CD8-positive, alpha-beta memory T cell (primary cell): ENCODE measurements at regions of chr1 and their contacts with region 1.

Region 1: GRCh38 chr1:185317034-185317885 is at the start of gene IVNS1ABP:
- DNase-seq: peak; percentile 91 to 97 (median 95)
- H3K4me3 ChIP-seq: peak within 1 kb of the TSS; percentile 91
- H3K4me3 Mint-ChIP-seq: peak within 1 kb of the TSS; percentile 93 to 99 (median 98)
- H3K27ac ChIP-seq: peak within 1 kb of the TSS; percentile 98
- H3K27ac Mint-ChIP-seq: peak within 1 kb of the TSS; percentile 95 to 100 (median 99)
- H3K4me1 ChIP-seq: peaks cover 46% of the 10 kb centered on the region
- H3K4me1 Mint-ChIP-seq: peaks cover 47 to 58% (median 55%) of the 10 kb centered on the region in 3 donors
- H3K27me3 ChIP-seq: no peaks in the 10 kb centered on the region
- H3K27me3 Mint-ChIP-seq: peaks cover 0 to 10% of the 10 kb centered on the region in 2 donors
- total RNA-seq, gene IVNS1ABP: 205 to 208 TPM

Region 2: DNA sequence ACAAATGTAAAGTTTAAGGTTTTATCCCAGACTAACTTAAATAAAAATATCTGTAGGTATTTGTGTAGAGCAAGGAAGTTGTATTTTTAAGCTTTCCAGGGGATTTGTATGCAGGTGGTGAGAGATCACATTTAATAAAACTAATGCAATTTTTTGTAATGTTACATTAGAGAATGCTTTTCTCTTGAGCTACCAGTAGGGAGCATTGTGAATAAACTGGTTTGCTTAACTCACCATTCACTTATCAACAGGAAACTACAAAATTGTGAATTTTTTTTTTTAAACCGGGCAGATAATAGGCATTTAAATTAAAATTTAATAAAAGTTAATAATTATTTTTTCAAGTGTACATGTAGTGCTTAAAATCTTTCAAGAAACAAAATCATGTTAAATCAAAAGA is 78.8 kb before region 1 on chr1:
- CTCF ChIA-PET with region 1: interaction called, 17 read pairs
- POLR2A ChIA-PET with region 1: interaction called, 8 read pairs
- DNase-seq: peak in 2 of 5 donors; percentile 24 to 27
- H3K4me3 ChIP-seq: no peak overlapping the region
- H3K4me3 Mint-ChIP-seq: peak overlapping the region in 4 of 7 donors; percentile 23 to 35 (median 30)
- H3K27ac ChIP-seq: no peak overlapping the region
- H3K27ac Mint-ChIP-seq: peak overlapping the region in 3 of 8 donors; percentile 24 to 64 (median 43)
- H3K4me1 ChIP-seq: peaks cover 3% of the 10 kb centered on the region
- H3K4me1 Mint-ChIP-seq: peaks cover 29 to 36% (median 30%) of the 10 kb centered on the region in 3 donors
- H3K27me3 ChIP-seq: no peaks in the 10 kb centered on the region
- H3K27me3 Mint-ChIP-seq: no peaks in the 10 kb centered on the region

Region 3: DNA sequence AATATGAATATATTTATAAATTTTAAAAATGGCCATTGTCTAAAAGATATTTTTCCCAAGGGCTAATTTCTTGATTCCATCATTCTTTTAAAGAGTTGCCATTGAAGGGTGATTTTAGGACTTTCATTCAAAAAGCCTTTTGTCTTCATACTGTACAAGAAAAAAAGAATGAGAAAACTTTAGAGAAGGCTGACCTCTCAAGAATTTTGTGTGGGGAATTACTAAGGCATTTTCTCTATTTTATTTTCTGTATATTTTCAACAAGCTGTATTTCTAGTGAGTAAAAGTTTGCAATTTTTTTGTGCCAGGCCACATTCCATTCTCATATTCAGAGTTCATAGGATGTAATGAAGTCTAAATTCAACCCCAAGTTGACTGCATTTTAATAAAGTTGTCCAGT is 49.6 kb before region 1 on chr1:
- CTCF ChIA-PET with region 1: no interaction called
- POLR2A ChIA-PET with region 1: no interaction called
- DNase-seq: no peak
- H3K4me3 ChIP-seq: no peak overlapping the region
- H3K4me3 Mint-ChIP-seq: no peak overlapping the region
- H3K27ac ChIP-seq: no peak overlapping the region
- H3K27ac Mint-ChIP-seq: no peak overlapping the region
- H3K4me1 ChIP-seq: no peaks in the 10 kb centered on the region
- H3K4me1 Mint-ChIP-seq: no peaks in the 10 kb centered on the region
- H3K27me3 ChIP-seq: no peaks in the 10 kb centered on the region
- H3K27me3 Mint-ChIP-seq: no peaks in the 10 kb centered on the region

Region 4: GRCh38 chr1:185338719-185339622 is 21.7 kb after region 1 on chr1:
- CTCF ChIA-PET with region 1: interaction called, 19 read pairs
- POLR2A ChIA-PET with region 1: interaction called, 21 read pairs
- DNase-seq: peak; percentile 15 to 71 (median 54)
- H3K4me3 ChIP-seq: peak overlapping the region; percentile 11
- H3K4me3 Mint-ChIP-seq: peak overlapping the region in 6 of 7 donors; percentile 57 to 79 (median 62)
- H3K27ac ChIP-seq: no peak overlapping the region
- H3K27ac Mint-ChIP-seq: peak overlapping the region; percentile 74 to 98 (median 80)
- H3K4me1 ChIP-seq: peaks cover 34% of the 10 kb centered on the region
- H3K4me1 Mint-ChIP-seq: peaks cover 29 to 45% (median 45%) of the 10 kb centered on the region in 3 donors
- H3K27me3 ChIP-seq: no peaks in the 10 kb centered on the region
- H3K27me3 Mint-ChIP-seq: no peaks in the 10 kb centered on the region

Region 5: DNA sequence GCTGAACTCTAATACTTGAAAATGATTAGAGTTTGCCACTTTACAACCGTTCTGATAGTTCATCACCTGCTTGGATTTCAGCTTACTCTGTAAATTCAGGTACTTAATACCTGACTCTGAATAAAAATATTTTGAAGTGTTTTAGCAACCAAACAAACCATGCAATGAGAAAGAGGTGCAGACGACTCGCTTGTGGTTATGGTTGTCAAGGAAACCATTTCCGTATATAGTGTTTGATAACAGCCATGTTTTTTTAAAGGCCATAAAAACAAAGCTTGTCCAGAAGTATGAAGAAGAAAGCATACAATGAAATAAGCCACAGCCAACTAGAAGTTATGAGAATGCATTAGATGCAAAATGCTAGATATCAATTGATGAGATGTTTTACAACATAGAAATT is 249.7 kb after region 1 on chr1:
- CTCF ChIA-PET with region 1: interaction called, 27 read pairs
- POLR2A ChIA-PET with region 1: interaction called, 19 read pairs
- DNase-seq: peak; percentile 7 to 91 (median 77)
- H3K4me3 ChIP-seq: peak overlapping the region; percentile 10
- H3K4me3 Mint-ChIP-seq: peak overlapping the region; percentile 40 to 74 (median 70)
- H3K27ac ChIP-seq: peak overlapping the region; percentile 74
- H3K27ac Mint-ChIP-seq: peak overlapping the region; percentile 96 to 100 (median 98)
- H3K4me1 ChIP-seq: peaks cover 54% of the 10 kb centered on the region
- H3K4me1 Mint-ChIP-seq: peaks cover 67 to 88% (median 87%) of the 10 kb centered on the region in 3 donors
- H3K27me3 ChIP-seq: no peaks in the 10 kb centered on the region
- H3K27me3 Mint-ChIP-seq: no peaks in the 10 kb centered on the region

Region 6: GRCh38 chr1:185670187-185670627 is 352.9 kb after region 1 on chr1:
- CTCF ChIA-PET with region 1: interaction called, 33 read pairs
- POLR2A ChIA-PET with region 1: interaction called, 5 read pairs
- DNase-seq: peak; percentile 19 to 68 (median 41)
- H3K4me3 ChIP-seq: no peak overlapping the region
- H3K4me3 Mint-ChIP-seq: no peak overlapping the region
- H3K27ac ChIP-seq: no peak overlapping the region
- H3K27ac Mint-ChIP-seq: peak overlapping the region in 2 of 8 donors; percentile 12 to 28
- H3K4me1 ChIP-seq: peaks cover 13% of the 10 kb centered on the region
- H3K4me1 Mint-ChIP-seq: peaks cover 19 to 31% (median 23%) of the 10 kb centered on the region in 3 donors
- H3K27me3 ChIP-seq: no peaks in the 10 kb centered on the region
- H3K27me3 Mint-ChIP-seq: no peaks in the 10 kb centered on the region

Region 7: GRCh38 chr1:185853739-185854138 is 536.5 kb after region 1 on chr1:
- CTCF ChIA-PET with region 1: no interaction called
- POLR2A ChIA-PET with region 1: no interaction called
- DNase-seq: no peak
- H3K4me3 ChIP-seq: no peak overlapping the region
- H3K4me3 Mint-ChIP-seq: no peak overlapping the region
- H3K27ac ChIP-seq: no peak overlapping the region
- H3K27ac Mint-ChIP-seq: no peak overlapping the region
- H3K4me1 ChIP-seq: no peaks in the 10 kb centered on the region
- H3K4me1 Mint-ChIP-seq: no peaks in the 10 kb centered on the region
- H3K27me3 ChIP-seq: no peaks in the 10 kb centered on the region
- H3K27me3 Mint-ChIP-seq: peaks cover 0 to 11% of the 10 kb centered on the region in 2 donors